Caco-2 (cell line): ENCODE measurements at regions of chr6 and their contacts with region 1.

Region 1: GRCh38 chr6:117515326-117515725 is 32.9 kb downstream of the DCBLD1 start:
- DNase-seq: peak in 1 of 2 experiments; percentile 42
- H3K4me3 ChIP-seq: no peak overlapping the region
- H3K4me3 Mint-ChIP-seq: peak overlapping the region; percentile 5
- H3K27ac Mint-ChIP-seq: peak overlapping the region; percentile 94
- H3K4me1 ChIP-seq: peaks cover 88% of the 10 kb centered on the region
- H3K4me1 Mint-ChIP-seq: peaks cover 60% of the 10 kb centered on the region
- H3K27me3 ChIP-seq: no peaks in the 10 kb centered on the region
- H3K27me3 Mint-ChIP-seq: no peaks in the 10 kb centered on the region
- CTCF ChIP-seq: no peak

Region 2: DNA sequence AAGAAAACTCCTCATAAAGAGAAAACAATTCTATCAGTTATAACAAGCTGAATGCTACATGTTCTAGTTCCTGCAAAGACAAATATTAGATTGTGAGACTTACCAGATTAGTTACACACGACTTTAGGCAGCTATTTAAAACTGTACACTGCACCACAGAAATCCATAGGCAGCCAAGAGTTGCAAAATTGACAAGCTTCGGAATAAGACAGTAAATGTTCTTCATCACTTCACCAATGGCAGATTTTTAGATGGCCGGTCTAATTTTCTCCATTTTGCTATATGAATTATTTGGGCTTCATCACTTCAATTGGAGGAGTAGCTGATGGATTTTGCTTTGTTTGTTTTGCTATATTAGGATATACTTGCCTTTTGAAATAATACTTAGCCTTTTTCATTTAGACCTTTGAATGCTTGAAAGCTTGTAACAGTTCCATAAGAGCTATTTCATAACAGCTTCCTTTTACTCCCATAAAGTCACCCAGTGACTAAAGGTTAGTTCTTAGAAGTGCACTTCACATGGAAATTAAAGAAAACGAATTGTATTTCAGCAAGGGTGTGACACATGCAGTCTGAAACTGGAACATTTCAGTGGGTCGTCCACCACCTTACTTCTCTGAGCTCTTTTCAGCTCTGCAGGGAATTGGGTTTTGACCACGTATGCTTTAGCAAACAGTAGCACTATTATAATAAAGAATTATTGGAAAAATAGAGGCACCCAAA is 89.7 kb before region 1 on chr6 and contains the start of gene ROS1:
- CTCF ChIA-PET with region 1: no interaction called
- POLR2A ChIA-PET with region 1: no interaction called
- intact Hi-C with region 1: no loop called
- DNase-seq: no peak
- H3K4me3 ChIP-seq: no peak within 1 kb of the TSS
- H3K4me3 Mint-ChIP-seq: no peak within 1 kb of the TSS
- H3K27ac Mint-ChIP-seq: no peak within 1 kb of the TSS
- H3K4me1 ChIP-seq: no peaks in the 10 kb centered on the region
- H3K4me1 Mint-ChIP-seq: no peaks in the 10 kb centered on the region
- H3K27me3 ChIP-seq: no peaks in the 10 kb centered on the region
- H3K27me3 Mint-ChIP-seq: peaks cover 5% of the 10 kb centered on the region
- CTCF ChIP-seq: no peak
- total RNA-seq, gene ROS1: 0.16 TPM in 1 of 2 replicates, not detected in the other

Region 3: GRCh38 chr6:117498159-117498558 is 17.2 kb before region 1 on chr6:
- CTCF ChIA-PET with region 1: no interaction called
- POLR2A ChIA-PET with region 1: no interaction called
- intact Hi-C with region 1: no loop called
- DNase-seq: no peak
- H3K4me3 ChIP-seq: no peak overlapping the region
- H3K4me3 Mint-ChIP-seq: no peak overlapping the region
- H3K27ac Mint-ChIP-seq: no peak overlapping the region
- H3K4me1 ChIP-seq: peaks cover 47% of the 10 kb centered on the region
- H3K4me1 Mint-ChIP-seq: peaks cover 37% of the 10 kb centered on the region
- H3K27me3 ChIP-seq: no peaks in the 10 kb centered on the region
- H3K27me3 Mint-ChIP-seq: no peaks in the 10 kb centered on the region
- CTCF ChIP-seq: no peak

Region 4: GRCh38 chr6:117548797-117549301 is 33.5 kb after region 1 on chr6:
- CTCF ChIA-PET with region 1: no interaction called
- POLR2A ChIA-PET with region 1: interaction called, 9 read pairs
- intact Hi-C with region 1: loop called (anchors 1 kb)
- DNase-seq: no peak
- H3K4me3 ChIP-seq: no peak overlapping the region
- H3K4me3 Mint-ChIP-seq: no peak overlapping the region
- H3K27ac Mint-ChIP-seq: peak overlapping the region; percentile 40
- H3K4me1 ChIP-seq: peaks cover 61% of the 10 kb centered on the region
- H3K4me1 Mint-ChIP-seq: peaks cover 34% of the 10 kb centered on the region
- H3K27me3 ChIP-seq: no peaks in the 10 kb centered on the region
- H3K27me3 Mint-ChIP-seq: no peaks in the 10 kb centered on the region
- CTCF ChIP-seq: no peak

Region 5: DNA sequence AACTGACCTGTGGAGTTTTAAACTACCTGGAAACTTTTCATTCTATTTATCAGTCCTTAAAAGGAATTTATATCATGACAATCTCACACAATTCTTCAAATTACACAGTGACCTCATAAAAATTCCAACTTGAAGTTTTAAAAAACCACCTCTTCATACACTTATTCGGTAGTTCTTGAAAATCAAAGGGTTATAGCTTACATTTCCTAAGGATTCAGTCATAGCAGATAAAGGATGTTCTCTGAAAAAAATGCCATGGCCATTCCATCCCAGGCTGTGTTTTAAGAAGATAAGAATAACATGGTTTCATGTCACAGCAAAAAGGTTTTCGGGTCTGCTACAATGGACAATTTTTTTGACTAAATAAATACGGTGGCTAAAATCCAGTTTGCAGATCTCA is 45.8 kb after region 1 on chr6:
- CTCF ChIA-PET with region 1: no interaction called
- POLR2A ChIA-PET with region 1: no interaction called
- intact Hi-C with region 1: no loop called
- DNase-seq: no peak
- H3K4me3 ChIP-seq: no peak overlapping the region
- H3K4me3 Mint-ChIP-seq: no peak overlapping the region
- H3K27ac Mint-ChIP-seq: no peak overlapping the region
- H3K4me1 ChIP-seq: peaks cover 8% of the 10 kb centered on the region; the same call in 1 of the 2 replicates
- H3K4me1 Mint-ChIP-seq: no peaks in the 10 kb centered on the region
- H3K27me3 ChIP-seq: no peaks in the 10 kb centered on the region
- H3K27me3 Mint-ChIP-seq: no peaks in the 10 kb centered on the region
- CTCF ChIP-seq: no peak